SK-N-SH (cell line): ENCODE measurements at regions of chr18 and their contacts with region 1.

Region 1: GRCh38 chr18:14086458-14087231 is 45.6 kb downstream of the ZNF519 start:
- DNase-seq: peak; percentile 45
- H3K4me3 ChIP-seq: peak overlapping the region in 1 of 2 experiments; percentile 35; a peak in 1 of 4 replicates
- H3K27ac ChIP-seq: no peak overlapping the region
- H3K4me1 ChIP-seq: peaks cover 0 to 3% of the 10 kb centered on the region in 2 experiments; a peak in 1 of 4 replicates
- H3K27me3 ChIP-seq: no peaks in the 10 kb centered on the region
- CTCF ChIP-seq: peak; percentile 87
- EP300 ChIP-seq: no peak
- RAD21 ChIP-seq: peak; percentile 91

Region 2: DNA sequence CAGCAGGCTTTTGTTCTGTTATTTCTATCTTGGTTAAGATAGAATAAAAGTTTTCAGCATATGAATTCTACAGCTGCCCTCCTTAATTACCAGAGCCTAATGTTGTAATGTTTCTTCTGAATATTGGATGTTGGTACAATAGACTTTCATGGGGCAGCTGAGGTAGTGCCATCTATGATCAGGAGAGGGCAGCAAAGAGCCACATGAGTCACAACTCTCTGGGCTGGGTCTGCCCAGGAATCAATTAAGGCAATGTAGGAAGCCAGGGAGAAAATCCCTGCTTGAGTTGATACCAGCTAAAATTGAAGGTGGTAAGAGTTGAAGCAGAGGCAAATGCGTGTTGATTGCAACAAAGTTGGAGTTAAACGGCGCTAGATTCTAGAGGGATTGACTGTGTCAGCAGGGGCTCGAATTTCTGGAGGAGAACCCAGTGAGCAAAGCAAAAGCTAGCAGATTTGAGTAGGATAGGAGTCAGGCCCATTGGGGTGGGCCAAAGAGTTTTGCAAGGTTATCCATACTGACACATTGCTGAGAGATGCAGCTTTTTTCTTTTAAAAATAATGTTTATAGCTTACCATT is 273.3 kb before region 1 on chr18:
- CTCF ChIA-PET with region 1: interaction called, 60 read pairs
- POLR2A ChIA-PET with region 1: no interaction called
- DNase-seq: peak; percentile 77
- H3K4me3 ChIP-seq: no peak overlapping the region
- H3K27ac ChIP-seq: no peak overlapping the region
- H3K4me1 ChIP-seq: no peaks in the 10 kb centered on the region
- H3K27me3 ChIP-seq: peaks cover 35% of the 10 kb centered on the region; the same call in 1 of the 2 replicates
- CTCF ChIP-seq: peak; percentile 80
- EP300 ChIP-seq: no peak
- RAD21 ChIP-seq: peak; percentile 76

Region 3: DNA sequence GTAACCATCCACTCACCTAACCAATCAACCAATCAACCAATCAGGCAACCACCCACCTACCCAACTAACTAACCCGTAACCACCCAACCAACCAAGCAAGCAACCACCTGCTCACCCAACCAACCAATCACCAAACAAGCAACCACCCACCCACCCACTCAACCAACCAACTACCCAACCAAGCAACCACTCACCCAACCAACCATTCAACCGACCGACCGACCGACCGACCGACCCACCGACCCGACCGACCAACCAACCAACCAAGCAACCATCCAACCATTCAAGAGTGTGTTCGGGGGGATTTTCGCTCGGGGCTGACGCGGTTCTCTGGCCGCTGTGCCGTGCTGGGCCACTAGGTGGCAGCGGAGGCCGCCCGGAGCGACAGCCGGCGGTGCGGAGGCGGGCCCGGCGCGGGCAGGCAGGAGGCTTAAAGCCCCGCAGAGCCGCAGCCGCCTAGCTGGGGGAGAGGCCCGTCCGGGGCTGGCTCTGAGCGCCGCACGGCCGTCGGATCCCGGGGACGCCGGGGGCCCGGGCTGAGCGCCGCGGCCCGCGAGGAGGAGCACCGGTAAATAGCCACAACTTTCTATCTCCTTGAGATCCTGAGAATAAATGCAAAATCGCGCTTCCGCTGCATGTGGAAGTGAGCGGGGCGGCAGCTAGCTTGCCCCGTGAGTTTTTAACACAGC is 262.8 kb before region 1 on chr18 and contains the start of gene MC5R:
- CTCF ChIA-PET with region 1: interaction called, 39 read pairs
- POLR2A ChIA-PET with region 1: no interaction called
- DNase-seq: peak; percentile 92
- H3K4me3 ChIP-seq: peak within 1 kb of the TSS; percentile 46 to 66
- H3K27ac ChIP-seq: no peak within 1 kb of the TSS
- H3K4me1 ChIP-seq: no peaks in the 10 kb centered on the region; a peak in 1 of 4 replicates
- H3K27me3 ChIP-seq: peaks cover 63% of the 10 kb centered on the region
- CTCF ChIP-seq: peak; percentile 81
- EP300 ChIP-seq: no peak
- RAD21 ChIP-seq: peak; percentile 82
- polyA plus RNA-seq, gene MC5R: not detected in 2 replicates

Region 4: GRCh38 chr18:13831864-13832508 is 254.7 kb before region 1 on chr18:
- CTCF ChIA-PET with region 1: interaction called, 39 read pairs
- POLR2A ChIA-PET with region 1: no interaction called
- DNase-seq: no peak
- H3K4me3 ChIP-seq: no peak overlapping the region
- H3K27ac ChIP-seq: no peak overlapping the region
- H3K4me1 ChIP-seq: no peaks in the 10 kb centered on the region
- H3K27me3 ChIP-seq: peaks cover 51% of the 10 kb centered on the region; the same call in 1 of the 2 replicates
- CTCF ChIP-seq: peak; percentile 35
- EP300 ChIP-seq: no peak
- RAD21 ChIP-seq: no peak

Region 5: GRCh38 chr18:14053661-14054060 is 33.0 kb before region 1 on chr18:
- CTCF ChIA-PET with region 1: interaction called, 12 read pairs
- POLR2A ChIA-PET with region 1: no interaction called
- DNase-seq: no peak
- H3K4me3 ChIP-seq: no peak overlapping the region
- H3K27ac ChIP-seq: no peak overlapping the region
- H3K4me1 ChIP-seq: no peaks in the 10 kb centered on the region
- H3K27me3 ChIP-seq: no peaks in the 10 kb centered on the region
- CTCF ChIP-seq: no peak
- EP300 ChIP-seq: no peak
- RAD21 ChIP-seq: no peak

Region 6: GRCh38 chr18:14074187-14074586 is 12.5 kb before region 1 on chr18:
- CTCF ChIA-PET with region 1: interaction called, 11 read pairs
- POLR2A ChIA-PET with region 1: no interaction called
- DNase-seq: peak; percentile 15
- H3K4me3 ChIP-seq: no peak overlapping the region
- H3K27ac ChIP-seq: no peak overlapping the region
- H3K4me1 ChIP-seq: no peaks in the 10 kb centered on the region
- H3K27me3 ChIP-seq: no peaks in the 10 kb centered on the region
- CTCF ChIP-seq: peak; percentile 41
- EP300 ChIP-seq: no peak
- RAD21 ChIP-seq: peak; percentile 17; the same call in 1 of the 2 replicates

Region 7: GRCh38 chr18:14100503-14101286 is 14.1 kb after region 1 on chr18:
- CTCF ChIA-PET with region 1: interaction called, 14 read pairs
- POLR2A ChIA-PET with region 1: no interaction called
- DNase-seq: no peak
- H3K4me3 ChIP-seq: no peak overlapping the region
- H3K27ac ChIP-seq: no peak overlapping the region
- H3K4me1 ChIP-seq: no peaks in the 10 kb centered on the region
- H3K27me3 ChIP-seq: no peaks in the 10 kb centered on the region
- CTCF ChIP-seq: no peak
- EP300 ChIP-seq: no peak
- RAD21 ChIP-seq: no peak

Region 8: DNA sequence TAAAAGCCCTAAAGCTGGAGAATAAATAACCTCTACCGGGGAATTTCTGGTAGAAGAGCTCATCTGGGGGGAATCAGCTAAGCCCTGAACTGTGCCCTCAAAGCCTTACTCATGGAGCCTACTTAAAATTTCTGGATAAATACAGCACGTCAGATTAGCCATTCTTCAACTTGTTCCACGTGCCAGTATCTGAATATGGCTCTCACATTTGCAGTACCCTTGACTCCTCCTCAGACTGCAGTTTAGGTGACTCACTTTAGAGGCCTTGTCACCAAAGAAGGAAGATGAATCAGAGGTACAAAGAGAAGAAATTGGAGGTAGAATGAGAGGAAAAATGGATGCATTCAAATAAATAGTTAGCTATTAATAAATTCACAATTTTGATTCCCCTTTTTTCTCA is 491.3 kb after region 1 on chr18:
- CTCF ChIA-PET with region 1: no interaction called
- POLR2A ChIA-PET with region 1: no interaction called
- DNase-seq: no peak
- H3K4me3 ChIP-seq: no peak overlapping the region
- H3K27ac ChIP-seq: no peak overlapping the region
- H3K4me1 ChIP-seq: no peaks in the 10 kb centered on the region
- H3K27me3 ChIP-seq: no peaks in the 10 kb centered on the region
- CTCF ChIP-seq: no peak
- EP300 ChIP-seq: no peak
- RAD21 ChIP-seq: no peak